ENCODE measurements at regions of chr2 and their contacts with region 1.

Region 1: DNA sequence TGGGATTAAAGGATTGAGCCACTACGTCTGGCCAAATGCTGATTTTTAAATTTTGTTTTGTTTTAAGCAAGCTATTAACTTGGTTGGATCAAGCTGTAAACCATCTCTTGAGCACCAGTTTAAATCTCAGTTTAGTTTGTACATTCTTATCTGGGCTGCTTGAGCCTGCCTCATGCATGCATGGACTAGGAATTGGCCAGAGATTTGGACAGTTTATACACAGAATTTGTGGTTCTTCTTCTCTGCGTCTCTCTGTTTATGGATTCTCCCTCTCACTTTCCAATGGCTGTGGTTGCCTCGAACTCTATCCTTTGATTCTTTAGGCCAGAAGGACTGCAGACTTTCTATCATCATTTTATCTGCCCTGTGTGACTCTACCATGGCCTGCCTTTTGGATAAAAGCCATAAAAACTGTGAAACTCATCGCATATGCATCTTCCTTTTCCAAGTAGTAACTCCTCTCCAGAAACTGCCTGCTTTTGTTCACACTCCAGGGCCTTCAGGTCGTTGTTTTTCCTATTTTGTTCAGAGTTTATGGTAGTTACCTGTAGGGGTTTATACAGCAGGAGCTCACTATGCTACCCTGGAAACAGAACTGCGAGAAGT is 32.5 kb upstream of the PLB1 start:
- DNase-seq: no peak
- H3K4me3 ChIP-seq: no peak overlapping the region
- H3K27me3 ChIP-seq: 0 out of 2 replicates have a peak, but pooled peaks cover 3% of the 10 kb centered on the region
- CTCF ChIP-seq: no peak

Region 2: GRCh38 chr2:28452534-28453081 is 10.7 kb before region 1 on chr2:
- CTCF ChIA-PET with region 1: interaction called, 10 read pairs
- POLR2A ChIA-PET with region 1: no interaction called
- DNase-seq: no peak
- H3K4me3 ChIP-seq: no peak overlapping the region
- H3K27me3 ChIP-seq: no peaks in the 10 kb centered on the region
- CTCF ChIP-seq: peak; percentile 97

Measured in BJ (cell line).